ENCODE measurements at regions of chr2 and their contacts with region 1.

Region 1: GRCh38 chr2:218568190-218569037 is at the starts of genes CNOT9 and USP37:
- DNase-seq: peak; percentile 100
- H3K4me3 Mint-ChIP-seq: peak within 1 kb of the TSS; percentile 93
- H3K27ac Mint-ChIP-seq: peak within 1 kb of the TSS; percentile 100
- H3K4me1 Mint-ChIP-seq: peaks cover 52% of the 10 kb centered on the region
- H3K27me3 Mint-ChIP-seq: no peaks in the 10 kb centered on the region
- total RNA-seq, gene CNOT9: 131 and 134 TPM in 2 replicates
- total RNA-seq, gene USP37: 45.0 and 45.5 TPM in 2 replicates

Region 2: DNA sequence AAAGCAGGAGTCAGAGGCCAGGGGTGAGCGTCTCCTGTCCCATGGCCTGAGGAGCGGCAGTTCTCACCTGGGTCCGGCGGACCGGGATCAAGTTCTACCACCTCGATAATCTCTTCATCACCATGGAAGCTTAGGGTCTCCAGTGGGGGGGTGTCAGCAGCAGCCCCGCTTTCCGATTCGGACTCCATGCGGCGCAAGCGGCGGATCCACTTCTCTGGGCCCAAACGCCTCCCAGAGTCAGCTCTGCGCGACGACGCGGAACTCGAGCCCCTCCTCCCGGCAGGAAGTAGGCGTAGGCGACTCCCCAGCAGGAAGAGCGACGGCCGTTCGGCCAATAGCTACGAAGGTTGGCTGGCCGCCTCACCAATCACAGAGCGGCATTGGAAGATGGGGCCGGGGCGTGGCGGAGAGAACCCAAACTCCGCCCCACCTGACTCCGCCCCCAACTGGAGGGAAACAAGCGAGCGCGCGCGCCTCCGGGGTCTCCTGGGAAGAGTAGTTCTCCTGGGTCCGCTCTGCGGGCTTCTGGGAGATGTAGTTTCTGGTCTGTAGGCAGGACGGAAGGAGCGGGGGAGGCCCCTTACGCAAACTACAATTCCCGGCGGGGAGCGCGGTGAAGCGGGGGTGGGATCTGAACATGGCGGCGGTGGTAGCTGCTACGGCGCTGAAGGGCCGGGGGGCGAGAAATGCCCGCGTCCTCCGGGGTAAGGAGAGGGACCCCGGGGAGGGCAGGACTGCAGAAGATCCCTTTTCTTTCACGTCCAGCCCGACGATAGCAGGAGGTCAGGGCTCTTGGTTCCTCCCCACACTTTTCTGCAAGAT is 298.3 kb before region 1 on chr2 and contains the starts of genes AAMP and PNKD:
- intact Hi-C with region 1: loop called (anchors 1 kb)
- DNase-seq: peak; percentile 100
- H3K4me3 Mint-ChIP-seq: peak within 1 kb of the TSS; percentile 99
- H3K27ac Mint-ChIP-seq: peak within 1 kb of the TSS; percentile 96
- H3K4me1 Mint-ChIP-seq: peaks cover 39% of the 10 kb centered on the region
- H3K27me3 Mint-ChIP-seq: peaks cover 2% of the 10 kb centered on the region
- total RNA-seq, gene AAMP: 85.3 and 89.0 TPM in 2 replicates
- total RNA-seq, gene PNKD: 15.0 and 21.5 TPM in 2 replicates

Region 3: DNA sequence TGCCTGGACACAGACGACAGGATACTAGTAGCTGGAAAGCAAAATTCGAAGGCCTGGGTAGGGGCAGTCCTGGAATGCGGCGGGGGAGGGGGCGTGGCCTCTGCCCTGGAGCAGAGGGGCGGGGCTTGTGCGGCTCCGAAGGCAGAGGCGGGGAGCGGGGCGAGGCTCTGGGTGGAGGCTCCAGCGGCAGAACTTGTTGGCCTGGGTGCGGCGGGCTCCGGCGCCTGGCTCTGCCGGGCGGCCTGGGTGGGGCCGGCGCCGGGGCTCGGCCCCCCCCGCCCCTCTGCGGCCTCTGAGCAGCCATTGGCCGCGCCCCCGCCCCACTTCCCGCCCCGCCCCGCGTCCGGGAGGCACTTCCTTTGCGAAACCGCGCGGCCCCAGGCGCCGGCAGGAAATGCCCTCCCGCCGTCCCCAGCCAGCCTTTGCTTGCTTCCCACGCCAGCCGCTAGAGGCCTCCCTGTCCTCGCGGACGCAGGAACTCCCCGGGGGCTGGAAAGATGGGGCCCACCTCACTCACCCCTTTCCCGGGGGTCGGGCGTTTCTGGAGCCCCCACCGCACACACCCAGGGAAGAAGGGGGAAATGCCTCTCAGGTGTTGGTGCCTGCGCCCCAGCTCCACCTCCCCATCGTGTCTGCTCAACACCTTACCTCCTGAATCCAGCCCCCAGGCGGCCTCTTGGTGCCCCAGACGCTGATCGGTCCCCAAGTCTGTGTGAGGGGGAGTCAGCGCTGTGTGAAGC is 162.0 kb before region 1 on chr2:
- intact Hi-C with region 1: loop called (anchors 1 kb)
- DNase-seq: peak; percentile 97
- H3K4me3 Mint-ChIP-seq: peak overlapping the region; percentile 85
- H3K27ac Mint-ChIP-seq: peak overlapping the region; percentile 86
- H3K4me1 Mint-ChIP-seq: peaks cover 45% of the 10 kb centered on the region
- H3K27me3 Mint-ChIP-seq: no peaks in the 10 kb centered on the region

Region 4: GRCh38 chr2:218582076-218582475 is 13.7 kb after region 1 on chr2:
- intact Hi-C with region 1: loop called (anchors 1 kb)
- DNase-seq: no peak
- H3K4me3 Mint-ChIP-seq: no peak overlapping the region
- H3K27ac Mint-ChIP-seq: peak overlapping the region; percentile 82
- H3K4me1 Mint-ChIP-seq: peaks cover 37% of the 10 kb centered on the region
- H3K27me3 Mint-ChIP-seq: no peaks in the 10 kb centered on the region

Region 5: GRCh38 chr2:218671654-218672566 is 103.5 kb after region 1 on chr2 and contains the starts of genes RNF25 and STK36:
- intact Hi-C with region 1: loop called (anchors 1 kb)
- DNase-seq: peak; percentile 95
- H3K4me3 Mint-ChIP-seq: peak within 1 kb of the TSS; percentile 97
- H3K27ac Mint-ChIP-seq: peak within 1 kb of the TSS; percentile 94
- H3K4me1 Mint-ChIP-seq: peaks cover 22% of the 10 kb centered on the region
- H3K27me3 Mint-ChIP-seq: no peaks in the 10 kb centered on the region
- total RNA-seq, gene RNF25: 23.6 and 28.8 TPM in 2 replicates
- total RNA-seq, gene STK36: 20.2 and 21.3 TPM in 2 replicates

Region 6: DNA sequence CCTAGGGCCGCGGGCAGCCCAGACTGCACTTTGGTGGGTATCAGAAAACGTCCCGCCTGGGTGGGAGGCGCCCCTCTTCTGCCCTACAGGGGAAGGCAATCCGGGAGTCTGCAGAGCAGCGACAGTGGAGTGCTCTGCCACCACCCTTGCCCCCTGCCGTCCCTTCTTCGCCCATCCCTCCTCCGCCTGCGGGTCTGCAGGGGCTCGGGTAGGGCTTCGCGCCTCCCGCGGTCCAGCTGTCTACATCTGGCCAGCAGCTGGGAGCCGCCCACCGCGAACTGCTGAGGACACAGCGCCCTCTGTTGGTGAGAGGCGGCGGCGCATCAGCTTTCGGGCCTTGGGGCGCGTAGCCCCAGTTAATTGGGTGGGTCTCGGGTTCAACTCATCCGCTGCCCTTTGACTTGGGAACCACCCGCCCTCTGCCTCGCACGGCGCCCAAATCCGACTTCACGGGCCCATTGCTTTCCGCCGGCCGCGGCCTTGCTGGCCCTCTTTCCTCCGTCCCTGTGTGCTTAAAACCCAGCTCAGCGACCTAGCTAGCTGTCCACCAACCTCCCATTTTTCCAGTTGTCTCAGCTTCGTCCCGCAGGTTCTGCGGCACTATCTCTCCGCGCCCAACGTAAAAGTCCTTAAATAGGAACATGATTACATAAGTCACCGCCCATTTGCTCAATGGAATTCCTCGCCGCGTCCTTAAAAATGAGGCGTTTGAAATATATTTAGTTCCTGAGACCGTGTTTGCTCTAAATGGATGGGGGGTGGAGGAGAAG is 329.9 kb after region 1 on chr2:
- intact Hi-C with region 1: loop called (anchors 2 kb)
- DNase-seq: peak; percentile 94
- H3K4me3 Mint-ChIP-seq: peak overlapping the region; percentile 76
- H3K27ac Mint-ChIP-seq: peak overlapping the region; percentile 83
- H3K4me1 Mint-ChIP-seq: peaks cover 42% of the 10 kb centered on the region
- H3K27me3 Mint-ChIP-seq: peaks cover 61% of the 10 kb centered on the region

Region 7: DNA sequence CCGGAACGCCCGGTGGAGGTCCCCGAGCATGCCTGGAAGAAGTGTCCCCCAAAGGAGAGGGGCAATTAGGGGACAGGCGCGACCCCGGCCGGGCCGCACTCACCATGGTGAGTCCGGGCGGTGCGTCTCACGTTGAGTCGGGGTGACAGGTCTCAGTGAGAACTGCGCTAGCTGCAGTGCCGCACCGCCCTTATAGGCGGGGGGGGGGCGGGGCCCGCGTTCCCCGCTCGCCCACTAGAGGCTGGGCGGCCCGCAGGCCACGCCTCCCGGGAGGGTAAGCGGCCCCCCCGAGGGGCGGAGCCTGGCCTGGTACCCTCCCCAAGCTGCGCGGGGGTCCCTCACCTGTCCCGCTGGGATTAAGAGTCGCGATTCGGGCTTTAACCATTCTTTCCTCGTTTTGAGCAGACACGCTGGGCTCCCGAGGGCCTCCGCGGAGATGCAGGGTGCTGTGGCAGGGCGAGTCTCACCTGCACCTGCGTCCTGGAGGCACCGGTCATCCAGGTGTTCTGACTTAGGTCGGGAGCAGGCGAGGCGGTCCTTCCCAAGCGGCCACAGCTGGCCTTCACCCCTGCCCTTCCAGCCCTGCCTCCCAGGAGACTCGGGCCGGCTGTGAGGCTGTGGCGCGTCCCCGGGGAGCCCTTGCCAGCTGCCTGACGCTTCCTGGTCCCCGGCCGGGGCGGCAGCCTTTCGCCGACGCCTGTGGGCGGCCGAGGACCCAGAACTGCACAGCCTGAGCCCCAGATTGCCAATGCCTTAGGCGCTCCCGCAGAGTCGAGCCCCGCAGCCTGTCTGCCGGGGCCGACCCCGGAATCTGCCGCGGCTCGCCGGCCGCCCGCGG is 685.6 kb after region 1 on chr2 and contains the start of gene TUBA4A:
- intact Hi-C with region 1: loop called (anchors 5 kb)
- DNase-seq: peak; percentile 97
- H3K4me3 Mint-ChIP-seq: peak within 1 kb of the TSS; percentile 80
- H3K27ac Mint-ChIP-seq: peak within 1 kb of the TSS; percentile 91
- H3K4me1 Mint-ChIP-seq: peaks cover 47% of the 10 kb centered on the region
- H3K27me3 Mint-ChIP-seq: no peaks in the 10 kb centered on the region
- total RNA-seq, gene TUBA4A: 235 and 240 TPM in 2 replicates